ENCODE measurements at regions of chr9 and their contacts with region 1.

Region 1: DNA sequence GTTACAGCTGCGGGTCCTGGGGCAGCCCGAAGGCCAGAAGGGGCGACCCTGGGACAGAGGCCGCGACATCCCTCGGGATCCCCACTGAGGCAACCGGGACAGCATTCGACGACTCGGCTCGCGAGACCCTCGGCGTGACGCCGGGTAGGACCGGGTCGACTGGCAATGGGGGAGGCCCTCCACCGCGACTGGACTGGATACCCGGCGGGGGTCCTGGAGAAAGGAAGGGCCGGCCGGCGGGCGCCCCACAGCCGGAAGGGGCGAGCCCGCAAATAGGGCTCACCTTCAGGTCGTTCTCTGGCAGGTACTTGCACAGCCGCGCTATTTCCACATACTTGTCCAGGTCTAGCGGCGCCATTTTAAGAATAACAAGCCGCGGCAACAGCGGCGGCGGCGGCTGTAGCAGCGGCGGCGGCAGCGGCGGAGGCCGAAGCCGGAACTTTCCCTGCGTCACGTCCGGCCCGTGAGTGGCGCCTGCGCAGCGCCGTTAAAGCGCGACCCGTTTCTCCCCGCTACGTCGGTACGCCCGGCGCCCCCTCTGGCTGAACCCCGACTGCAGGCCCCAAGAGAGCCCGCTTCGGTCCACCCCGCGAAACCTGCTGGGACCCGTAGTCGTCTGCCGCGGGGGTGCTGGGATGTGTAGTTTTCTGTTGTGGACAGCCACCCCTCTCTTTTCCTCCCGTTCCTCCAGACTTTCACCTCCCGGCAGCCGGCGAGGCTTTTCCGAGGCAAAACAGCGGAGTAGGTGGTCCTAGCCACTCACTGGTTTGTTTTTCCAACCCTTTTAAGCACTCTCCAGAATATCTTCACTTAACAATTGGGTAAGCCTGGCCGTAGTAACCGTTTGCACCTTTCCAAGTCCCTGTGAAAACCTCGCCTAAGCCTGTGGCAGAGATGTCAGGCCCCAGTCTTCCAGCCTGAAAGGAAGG is at the start of gene PPP6C:
- DNase-seq: peak; percentile 93
- ATAC-seq: peak; percentile 98
- H3K4me3 Mint-ChIP-seq: peak within 1 kb of the TSS; percentile 97
- H3K27ac Mint-ChIP-seq: peak within 1 kb of the TSS; percentile 91
- H3K4me1 Mint-ChIP-seq: peaks cover 44% of the 10 kb centered on the region
- H3K27me3 Mint-ChIP-seq: no peaks in the 10 kb centered on the region
- CTCF ChIP-seq: no peak
- total RNA-seq, gene PPP6C: 41.2 and 47.0 TPM in 2 replicates

Region 2: GRCh38 chr9:124940693-124941453 is 248.8 kb before region 1 on chr9 and contains the start of gene GOLGA1:
- CTCF ChIA-PET with region 1: no interaction called
- POLR2A ChIA-PET with region 1: no interaction called
- intact Hi-C with region 1: loop called (anchors 1 kb)
- DNase-seq: peak; percentile 92
- ATAC-seq: peak; percentile 87
- H3K4me3 Mint-ChIP-seq: peak within 1 kb of the TSS; percentile 96
- H3K27ac Mint-ChIP-seq: peak within 1 kb of the TSS; percentile 98
- H3K4me1 Mint-ChIP-seq: peaks cover 23% of the 10 kb centered on the region
- H3K27me3 Mint-ChIP-seq: no peaks in the 10 kb centered on the region
- CTCF ChIP-seq: no peak
- total RNA-seq, gene GOLGA1: 11.8 and 14.0 TPM in 2 replicates

Region 3: GRCh38 chr9:125126019-125126746 is 63.4 kb before region 1 on chr9:
- CTCF ChIA-PET with region 1: no interaction called
- POLR2A ChIA-PET with region 1: no interaction called
- intact Hi-C with region 1: no loop called
- DNase-seq: peak; percentile 38
- ATAC-seq: peak; percentile 98
- H3K4me3 Mint-ChIP-seq: no peak overlapping the region
- H3K27ac Mint-ChIP-seq: peak overlapping the region; percentile 92
- H3K4me1 Mint-ChIP-seq: peaks cover 16% of the 10 kb centered on the region
- H3K27me3 Mint-ChIP-seq: no peaks in the 10 kb centered on the region
- CTCF ChIP-seq: no peak

Region 4: GRCh38 chr9:125172031-125172755 is 17.4 kb before region 1 on chr9:
- CTCF ChIA-PET with region 1: no interaction called
- POLR2A ChIA-PET with region 1: interaction called, 12 read pairs
- intact Hi-C with region 1: no loop called
- DNase-seq: no peak
- ATAC-seq: no peak
- H3K4me3 Mint-ChIP-seq: peak overlapping the region; percentile 5
- H3K27ac Mint-ChIP-seq: peak overlapping the region; percentile 9
- H3K4me1 Mint-ChIP-seq: peaks cover 22% of the 10 kb centered on the region
- H3K27me3 Mint-ChIP-seq: no peaks in the 10 kb centered on the region
- CTCF ChIP-seq: no peak

Region 5: GRCh38 chr9:125200210-125201047 is 10.8 kb after region 1 on chr9 and contains the start of gene RABEPK:
- CTCF ChIA-PET with region 1: no interaction called
- POLR2A ChIA-PET with region 1: interaction called, 36 read pairs
- intact Hi-C with region 1: loop called (anchors 1 kb)
- DNase-seq: peak; percentile 95
- ATAC-seq: peak; percentile 98
- H3K4me3 Mint-ChIP-seq: peak within 1 kb of the TSS; percentile 94
- H3K27ac Mint-ChIP-seq: peak within 1 kb of the TSS; percentile 92
- H3K4me1 Mint-ChIP-seq: peaks cover 13% of the 10 kb centered on the region
- H3K27me3 Mint-ChIP-seq: no peaks in the 10 kb centered on the region
- CTCF ChIP-seq: no peak
- total RNA-seq, gene RABEPK: 19.1 and 19.4 TPM in 2 replicates

Region 6: GRCh38 chr9:125261501-125262293 is 72.1 kb after region 1 on chr9 and contains the start of gene GAPVD1:
- CTCF ChIA-PET with region 1: no interaction called
- POLR2A ChIA-PET with region 1: interaction called, 3 read pairs
- intact Hi-C with region 1: loop called (anchors 1 kb)
- DNase-seq: peak; percentile 97
- ATAC-seq: peak; percentile 93
- H3K4me3 Mint-ChIP-seq: peak within 1 kb of the TSS; percentile 96
- H3K27ac Mint-ChIP-seq: peak within 1 kb of the TSS; percentile 99
- H3K4me1 Mint-ChIP-seq: peaks cover 48% of the 10 kb centered on the region
- H3K27me3 Mint-ChIP-seq: peaks cover 2% of the 10 kb centered on the region
- CTCF ChIP-seq: no peak
- total RNA-seq, gene GAPVD1: 46.6 and 53.9 TPM in 2 replicates

Region 7: DNA sequence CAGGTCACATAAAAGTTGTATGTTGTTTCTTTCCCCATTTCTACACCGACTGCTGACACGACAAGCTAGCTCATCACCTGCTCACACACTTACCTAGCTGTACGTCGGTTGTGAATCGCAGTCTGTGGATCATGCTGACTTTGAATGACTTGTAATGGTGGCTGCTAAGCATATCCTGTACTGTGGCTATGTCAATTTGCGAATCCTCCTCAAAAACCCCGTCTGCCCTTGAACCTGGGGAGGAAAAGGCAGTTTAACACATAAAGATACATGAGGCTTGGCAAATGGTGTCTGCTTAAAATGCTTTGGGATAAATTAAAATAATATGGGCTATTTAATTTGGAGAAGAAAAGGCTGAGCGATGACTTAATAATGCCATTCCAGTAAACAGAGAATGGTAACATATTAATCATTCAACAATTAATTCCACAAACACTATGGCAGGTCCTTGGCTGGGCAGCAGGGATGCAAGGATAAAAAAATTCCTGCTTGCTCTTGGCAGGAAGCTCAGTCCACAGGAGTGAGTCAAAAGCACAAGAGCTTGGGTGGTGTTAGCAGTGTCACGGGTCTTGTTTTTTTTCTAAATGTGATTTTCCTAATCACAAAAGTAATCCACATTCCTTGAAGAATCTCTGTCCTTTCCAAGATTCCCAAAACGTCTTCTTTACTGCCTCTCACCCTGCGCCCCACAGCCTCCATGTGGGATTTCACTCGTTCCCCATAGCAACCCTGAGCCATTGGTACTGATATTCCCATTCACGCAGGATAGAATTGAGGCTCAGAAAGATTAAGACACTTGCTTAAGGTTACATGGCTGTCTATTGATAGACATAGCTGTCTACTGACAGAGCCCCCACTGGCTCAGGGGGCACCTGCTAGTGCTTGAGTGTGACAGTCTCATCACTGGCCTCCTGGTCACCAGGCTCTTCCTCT is 295.0 kb after region 1 on chr9:
- CTCF ChIA-PET with region 1: no interaction called
- POLR2A ChIA-PET with region 1: no interaction called
- intact Hi-C with region 1: no loop called
- DNase-seq: no peak
- ATAC-seq: no peak
- H3K4me3 Mint-ChIP-seq: no peak overlapping the region
- H3K27ac Mint-ChIP-seq: no peak overlapping the region
- H3K4me1 Mint-ChIP-seq: no peaks in the 10 kb centered on the region
- H3K27me3 Mint-ChIP-seq: no peaks in the 10 kb centered on the region
- CTCF ChIP-seq: no peak